Naive thymus-derived CD4-positive, alpha-beta T cell (primary cell): ENCODE measurements at regions of chr6 and their contacts with region 1.

Region 1: GRCh38 chr6:30066577-30067459 is at the start of gene PPP1R11:
- DNase-seq: peak; percentile 84 to 100 (median 99)
- ATAC-seq: peak; percentile 99
- H3K4me3 ChIP-seq: peak within 1 kb of the TSS; percentile 94
- H3K4me3 Mint-ChIP-seq: peak within 1 kb of the TSS; percentile 87 to 100 (median 98)
- H3K27ac ChIP-seq: peak within 1 kb of the TSS; percentile 96
- H3K27ac Mint-ChIP-seq: peak within 1 kb of the TSS; percentile 96 to 100 (median 99)
- H3K4me1 ChIP-seq: peaks cover 28 to 41% of the 10 kb centered on the region in 2 donors
- H3K4me1 Mint-ChIP-seq: peaks cover 43 to 77% (median 71%) of the 10 kb centered on the region in 7 donors
- H3K27me3 ChIP-seq: no peaks in the 10 kb centered on the region
- H3K27me3 Mint-ChIP-seq: peaks cover 10 to 22% (median 16%) of the 10 kb centered on the region in 5 donors
- total RNA-seq, gene PPP1R11: 49.4 to 67.1 (median 62.7) TPM

Region 2: DNA sequence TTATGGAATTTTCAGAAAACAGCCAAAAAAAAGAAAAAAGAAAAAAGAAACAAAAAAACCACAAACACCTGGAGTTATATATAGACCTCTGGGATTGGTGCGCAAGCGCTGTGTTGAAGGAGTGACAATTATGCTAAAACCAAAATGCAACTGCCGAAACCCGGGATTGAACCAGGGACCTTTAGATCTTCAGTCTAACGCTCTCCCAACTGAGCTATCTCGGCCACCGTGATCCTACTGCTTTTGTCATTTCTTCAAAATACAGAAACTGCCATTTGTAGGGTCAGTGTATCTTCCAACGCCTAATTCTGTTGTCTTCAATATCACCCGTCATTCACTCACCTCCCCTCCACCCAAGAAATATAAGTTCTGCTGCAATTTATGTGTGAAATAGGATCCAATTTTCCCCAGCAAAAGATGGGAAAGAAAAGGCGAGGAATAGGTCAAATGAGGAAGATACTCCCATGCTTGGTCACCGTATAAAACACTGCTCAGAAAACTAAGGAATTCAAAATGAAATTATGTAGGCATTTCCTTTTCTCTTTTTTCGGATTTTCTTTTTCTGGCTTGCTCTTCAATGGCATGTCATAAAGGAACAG is 1259.0 kb before region 1 on chr6:
- CTCF ChIA-PET with region 1: no interaction called
- POLR2A ChIA-PET with region 1: no interaction called
- intact Hi-C with region 1: no loop called
- DNase-seq: no peak
- ATAC-seq: no peak
- H3K4me3 ChIP-seq: no peak overlapping the region
- H3K4me3 Mint-ChIP-seq: peak overlapping the region in 4 of 10 donors; percentile 2 to 43 (median 13)
- H3K27ac ChIP-seq: no peak overlapping the region
- H3K27ac Mint-ChIP-seq: peak overlapping the region in 3 of 9 donors; percentile 31 to 49 (median 33)
- H3K4me1 ChIP-seq: no peaks in the 10 kb centered on the region
- H3K4me1 Mint-ChIP-seq: peaks cover 0 to 30% (median 7%) of the 10 kb centered on the region in 7 donors
- H3K27me3 ChIP-seq: peaks cover 26 to 31% of the 10 kb centered on the region in 2 donors
- H3K27me3 Mint-ChIP-seq: peaks cover 83 to 95% (median 90%) of the 10 kb centered on the region in 5 donors

Region 3: DNA sequence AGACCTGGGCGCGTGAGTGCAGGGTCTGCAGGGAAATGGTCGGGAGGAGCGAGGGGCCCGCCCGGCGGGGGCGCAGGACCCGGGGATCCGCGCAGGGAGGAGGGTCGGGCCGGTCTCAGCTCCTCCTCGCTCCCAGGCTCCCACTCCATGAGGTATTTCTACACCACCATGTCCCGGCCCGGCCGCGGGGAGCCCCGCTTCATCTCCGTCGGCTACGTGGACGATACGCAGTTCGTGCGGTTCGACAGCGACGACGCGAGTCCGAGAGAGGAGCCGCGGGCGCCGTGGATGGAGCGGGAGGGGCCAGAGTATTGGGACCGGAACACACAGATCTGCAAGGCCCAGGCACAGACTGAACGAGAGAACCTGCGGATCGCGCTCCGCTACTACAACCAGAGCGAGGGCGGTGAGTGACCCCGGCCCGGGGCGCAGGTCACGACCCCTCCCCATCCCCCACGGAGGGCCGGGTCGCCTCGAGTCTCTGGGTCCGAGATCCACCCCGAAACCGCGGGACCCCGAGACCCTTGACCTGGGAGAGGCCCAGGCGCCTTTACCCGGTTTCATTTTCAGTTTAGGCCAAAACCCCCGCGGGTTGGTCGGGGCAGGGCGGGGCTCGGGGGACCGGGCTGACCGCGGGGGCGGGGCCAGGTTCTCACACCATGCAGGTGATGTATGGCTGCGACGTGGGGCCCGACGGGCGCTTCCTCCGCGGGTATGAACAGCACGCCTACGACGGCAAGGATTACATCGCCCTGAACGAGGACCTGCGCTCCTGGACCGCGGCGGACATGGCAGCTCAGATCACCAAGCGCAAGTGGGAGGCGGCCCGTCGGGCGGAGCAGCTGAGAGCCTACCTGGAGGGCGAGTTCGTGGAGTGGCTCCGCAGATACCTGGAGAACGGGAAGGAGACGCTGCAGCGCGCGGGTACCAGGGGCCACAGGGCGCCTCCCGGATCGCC is 178.7 kb before region 1 on chr6:
- CTCF ChIA-PET with region 1: no interaction called
- POLR2A ChIA-PET with region 1: no interaction called
- intact Hi-C with region 1: loop called in 1 of 2 experiments (anchors 5 kb)
- DNase-seq: peak in 8 of 9 donors; percentile 36 to 89 (median 72)
- ATAC-seq: peak; percentile 91
- H3K4me3 ChIP-seq: peak overlapping the region; percentile 73
- H3K4me3 Mint-ChIP-seq: peak overlapping the region in 9 of 10 donors; percentile 79 to 95 (median 94)
- H3K27ac ChIP-seq: peak overlapping the region; percentile 94
- H3K27ac Mint-ChIP-seq: peak overlapping the region in 8 of 9 donors; percentile 72 to 98 (median 94)
- H3K4me1 ChIP-seq: peaks cover 3 to 7% of the 10 kb centered on the region in 2 donors
- H3K4me1 Mint-ChIP-seq: peaks cover 0 to 27% (median 20%) of the 10 kb centered on the region in 7 donors
- H3K27me3 ChIP-seq: no peaks in the 10 kb centered on the region
- H3K27me3 Mint-ChIP-seq: peaks cover 0 to 18% (median 0%) of the 10 kb centered on the region in 5 donors

Region 4: GRCh38 chr6:30212865-30213666 is 146.2 kb after region 1 on chr6 and contains the start of gene TRIM26:
- CTCF ChIA-PET with region 1: no interaction called
- POLR2A ChIA-PET with region 1: interaction called, 19 read pairs
- intact Hi-C with region 1: loop called (anchors 1 kb)
- DNase-seq: peak; percentile 88 to 99 (median 97)
- ATAC-seq: peak; percentile 94
- H3K4me3 ChIP-seq: peak within 1 kb of the TSS; percentile 83
- H3K4me3 Mint-ChIP-seq: peak within 1 kb of the TSS; percentile 89 to 100 (median 96)
- H3K27ac ChIP-seq: peak within 1 kb of the TSS; percentile 99
- H3K27ac Mint-ChIP-seq: peak within 1 kb of the TSS; percentile 96 to 100 (median 99)
- H3K4me1 ChIP-seq: peaks cover 32 to 39% of the 10 kb centered on the region in 2 donors
- H3K4me1 Mint-ChIP-seq: peaks cover 47 to 62% (median 52%) of the 10 kb centered on the region in 7 donors
- H3K27me3 ChIP-seq: no peaks in the 10 kb centered on the region
- H3K27me3 Mint-ChIP-seq: peaks cover 0 to 5% (median 0%) of the 10 kb centered on the region in 5 donors
- total RNA-seq, gene TRIM26: 40.1 to 73.1 (median 49.1) TPM

Region 5: DNA sequence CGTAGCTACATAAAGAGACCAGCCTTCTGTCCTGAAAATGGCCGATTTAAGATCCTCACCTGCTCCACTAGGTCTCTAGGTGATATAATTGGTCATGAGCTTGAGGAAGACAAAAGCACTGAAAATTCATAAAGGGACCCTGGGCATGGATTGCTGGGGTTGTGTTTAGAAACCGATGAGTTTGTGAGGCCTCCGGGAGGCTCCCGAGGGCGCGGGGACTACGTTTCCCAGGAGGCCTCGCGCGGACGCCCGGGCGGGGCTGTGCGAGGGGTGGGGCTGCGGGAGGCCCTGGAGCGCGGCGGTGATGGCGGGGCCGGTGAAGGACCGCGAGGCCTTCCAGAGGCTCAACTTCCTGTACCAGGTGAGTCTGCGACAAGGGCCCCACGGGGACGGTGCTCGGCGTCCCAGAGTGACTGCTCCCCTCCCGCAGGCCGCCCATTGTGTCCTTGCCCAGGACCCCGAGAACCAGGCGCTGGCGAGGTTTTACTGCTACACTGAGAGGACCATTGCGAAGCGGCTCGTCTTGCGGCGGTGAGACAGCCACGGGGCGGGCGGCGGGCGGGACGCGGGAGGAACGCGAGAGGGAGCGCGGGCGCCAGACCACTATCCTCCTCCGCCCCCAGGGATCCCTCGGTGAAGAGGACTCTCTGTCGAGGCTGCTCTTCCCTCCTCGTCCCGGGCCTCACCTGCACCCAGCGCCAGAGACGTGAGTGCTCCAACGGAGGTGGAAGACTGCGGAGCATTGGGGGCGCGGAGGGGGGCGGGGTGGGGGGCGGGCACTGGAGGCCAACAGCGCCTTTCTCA is 278.3 kb after region 1 on chr6 and contains the start of gene RPP21:
- CTCF ChIA-PET with region 1: no interaction called
- POLR2A ChIA-PET with region 1: no interaction called
- intact Hi-C with region 1: loop called in 1 of 2 experiments (anchors 5 kb)
- DNase-seq: peak; percentile 74 to 91 (median 86)
- ATAC-seq: peak; percentile 99
- H3K4me3 ChIP-seq: peak within 1 kb of the TSS; percentile 77
- H3K4me3 Mint-ChIP-seq: peak within 1 kb of the TSS; percentile 81 to 94 (median 89)
- H3K27ac ChIP-seq: peak within 1 kb of the TSS; percentile 97
- H3K27ac Mint-ChIP-seq: peak within 1 kb of the TSS; percentile 84 to 97 (median 92)
- H3K4me1 ChIP-seq: peaks cover 0 to 12% of the 10 kb centered on the region in 2 donors
- H3K4me1 Mint-ChIP-seq: peaks cover 12 to 32% (median 24%) of the 10 kb centered on the region in 7 donors
- H3K27me3 ChIP-seq: no peaks in the 10 kb centered on the region
- H3K27me3 Mint-ChIP-seq: peaks cover 0 to 7% (median 0%) of the 10 kb centered on the region in 5 donors
- total RNA-seq, gene RPP21: 39.7 to 61.2 (median 44.9) TPM